Pancreas (tissue), 10 donors: ENCODE measurements at regions of chr4 and their contacts with region 1.

Region 1: DNA sequence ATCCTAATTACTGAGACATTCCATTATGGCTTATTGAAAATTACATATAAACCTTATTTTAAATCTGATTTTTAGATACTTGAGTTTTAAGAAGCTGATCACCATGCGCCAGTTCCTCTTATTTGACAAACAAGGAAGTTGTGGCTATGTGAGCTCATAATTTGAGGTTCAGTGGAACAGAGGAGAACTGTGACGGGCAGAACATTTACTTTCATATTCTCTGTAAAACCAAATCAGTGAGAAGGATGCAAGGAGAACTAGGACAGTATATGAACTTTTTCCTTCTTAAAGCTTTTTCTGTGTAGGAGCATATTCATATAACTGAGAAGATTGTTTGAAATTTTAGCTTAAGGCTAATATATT is 25.3 kb downstream of the STIM2 start:
- DNase-seq: peak in 1 of 6 donors; percentile 35
- ATAC-seq: peak in 3 of 4 donors; percentile 76 to 85 (median 81)
- H3K4me3 ChIP-seq: no peak overlapping the region
- H3K27ac ChIP-seq: peak overlapping the region in 1 of 4 donors; percentile 14
- H3K4me1 ChIP-seq: peaks cover 0 to 8% (median 0%) of the 10 kb centered on the region in 3 donors
- H3K27me3 ChIP-seq: no peaks in the 10 kb centered on the region
- CTCF ChIP-seq: no peak

Region 2: GRCh38 chr4:26509681-26510333 is 376.1 kb before region 1 on chr4:
- intact Hi-C with region 1: no loop called
- DNase-seq: no peak
- ATAC-seq: no peak
- H3K4me3 ChIP-seq: no peak overlapping the region
- H3K27ac ChIP-seq: no peak overlapping the region
- H3K4me1 ChIP-seq: no peaks in the 10 kb centered on the region
- H3K27me3 ChIP-seq: no peaks in the 10 kb centered on the region
- CTCF ChIP-seq: no peak

Region 3: GRCh38 chr4:27000820-27001219 is 114.9 kb after region 1 on chr4:
- intact Hi-C with region 1: loop called in 1 of 3 experiments (anchors 10 kb)
- DNase-seq: no peak
- ATAC-seq: peak in 3 of 4 donors; percentile 52 to 67 (median 60)
- H3K4me3 ChIP-seq: no peak overlapping the region
- H3K27ac ChIP-seq: no peak overlapping the region
- H3K4me1 ChIP-seq: peaks cover 0 to 14% (median 4%) of the 10 kb centered on the region in 3 donors
- H3K27me3 ChIP-seq: no peaks in the 10 kb centered on the region
- CTCF ChIP-seq: no peak